T-cell (primary cell): ENCODE measurements at regions of chr20 and their contacts with region 1.

Region 1: GRCh38 chr20:53763707-53764414 is 170.2 kb upstream of the ZNF217 start:
- DNase-seq: no peak
- ATAC-seq: no peak
- H3K4me3 ChIP-seq: no peak overlapping the region
- H3K4me3 Mint-ChIP-seq: no peak overlapping the region
- H3K27ac ChIP-seq: no peak overlapping the region
- H3K27ac Mint-ChIP-seq: peak overlapping the region in 1 of 2 donors; percentile 9
- H3K4me1 ChIP-seq: no peaks in the 10 kb centered on the region
- H3K4me1 Mint-ChIP-seq: peaks cover under 1 to 8% (median 5%) of the 10 kb centered on the region in 3 donors
- H3K27me3 ChIP-seq: no peaks in the 10 kb centered on the region
- H3K27me3 Mint-ChIP-seq: no peaks in the 10 kb centered on the region

Region 2: DNA sequence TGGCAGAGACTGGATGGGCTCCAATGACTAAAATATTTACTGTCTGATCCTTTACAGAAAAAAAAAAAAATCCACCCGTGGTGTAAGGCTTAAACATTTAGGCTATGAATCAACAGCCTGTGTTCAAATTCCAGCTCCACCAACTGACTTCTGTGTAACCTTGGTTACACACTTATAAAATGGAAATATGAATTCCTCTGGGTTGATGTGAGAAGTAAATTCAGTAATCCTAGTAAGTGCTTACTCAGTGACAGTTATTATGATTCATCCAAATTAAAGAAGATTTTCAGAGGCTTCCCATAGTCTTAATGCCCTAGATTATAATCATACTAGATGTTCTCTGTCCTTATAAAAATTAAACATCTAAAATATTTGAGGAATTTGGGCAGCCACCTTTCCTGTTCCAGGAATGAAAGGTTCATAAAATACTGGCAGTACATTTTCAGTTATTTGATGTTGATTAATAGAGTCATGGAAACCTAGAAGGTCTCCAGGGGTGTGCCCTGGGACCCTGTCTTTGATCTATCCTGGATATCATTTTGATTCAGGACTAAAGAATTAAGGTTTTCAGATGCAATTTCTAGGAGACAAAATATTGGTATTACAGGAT is 10.0 kb after region 1 on chr20:
- CTCF ChIA-PET with region 1: no interaction called
- POLR2A ChIA-PET with region 1: interaction called in 1 of 2 experiments, 10 read pairs
- DNase-seq: no peak
- ATAC-seq: no peak
- H3K4me3 ChIP-seq: no peak overlapping the region
- H3K4me3 Mint-ChIP-seq: no peak overlapping the region
- H3K27ac ChIP-seq: no peak overlapping the region
- H3K27ac Mint-ChIP-seq: no peak overlapping the region
- H3K4me1 ChIP-seq: no peaks in the 10 kb centered on the region
- H3K4me1 Mint-ChIP-seq: no peaks in the 10 kb centered on the region
- H3K27me3 ChIP-seq: no peaks in the 10 kb centered on the region
- H3K27me3 Mint-ChIP-seq: no peaks in the 10 kb centered on the region

Region 3: DNA sequence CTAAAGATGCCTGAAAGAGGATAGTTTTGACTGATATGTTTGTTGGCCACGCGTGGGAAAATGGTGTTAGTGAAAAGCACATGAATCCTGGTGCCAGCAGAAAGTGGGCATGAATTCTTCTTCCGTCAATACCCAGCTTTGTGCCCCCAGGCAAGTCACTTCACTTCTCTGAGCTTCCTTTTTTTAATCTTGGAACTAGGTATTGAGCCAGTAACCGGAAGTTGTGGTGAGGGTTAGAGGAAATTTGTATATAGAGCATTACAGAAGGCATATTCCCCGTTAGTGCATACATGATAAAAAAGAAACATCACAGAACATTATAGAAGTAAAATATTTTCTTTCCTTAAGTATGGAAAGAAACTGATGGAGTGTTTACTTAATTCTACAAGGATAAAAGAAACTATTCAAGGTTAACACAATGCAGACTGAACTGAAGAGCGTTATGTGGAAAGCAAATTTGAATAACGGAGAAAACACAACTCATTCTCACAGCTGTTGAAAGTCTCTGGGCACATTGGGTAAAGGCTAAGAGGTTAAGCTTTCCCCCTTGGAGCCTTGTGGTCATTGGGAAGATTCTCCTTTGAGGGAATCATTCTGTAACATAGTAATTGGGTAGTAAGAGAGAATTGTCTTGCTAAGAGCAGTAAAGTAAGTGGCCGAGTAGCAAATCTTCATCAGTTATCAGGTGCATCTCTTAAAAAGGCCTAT is 83.4 kb after region 1 on chr20:
- CTCF ChIA-PET with region 1: no interaction called
- POLR2A ChIA-PET with region 1: no interaction called
- DNase-seq: peak in 2 of 35 experiments; percentile 22 to 58
- ATAC-seq: peak in 3 of 4 experiments; percentile 48 to 63 (median 49)
- H3K4me3 ChIP-seq: peak overlapping the region in 1 of 2 donors; percentile 32
- H3K4me3 Mint-ChIP-seq: peak overlapping the region; percentile 62 to 71 (median 68)
- H3K27ac ChIP-seq: no peak overlapping the region
- H3K27ac Mint-ChIP-seq: peak overlapping the region; percentile 91 to 94
- H3K4me1 ChIP-seq: peaks cover 45 to 58% of the 10 kb centered on the region in 2 experiments
- H3K4me1 Mint-ChIP-seq: peaks cover 65 to 77% (median 66%) of the 10 kb centered on the region in 3 donors
- H3K27me3 ChIP-seq: no peaks in the 10 kb centered on the region
- H3K27me3 Mint-ChIP-seq: no peaks in the 10 kb centered on the region

Region 4: DNA sequence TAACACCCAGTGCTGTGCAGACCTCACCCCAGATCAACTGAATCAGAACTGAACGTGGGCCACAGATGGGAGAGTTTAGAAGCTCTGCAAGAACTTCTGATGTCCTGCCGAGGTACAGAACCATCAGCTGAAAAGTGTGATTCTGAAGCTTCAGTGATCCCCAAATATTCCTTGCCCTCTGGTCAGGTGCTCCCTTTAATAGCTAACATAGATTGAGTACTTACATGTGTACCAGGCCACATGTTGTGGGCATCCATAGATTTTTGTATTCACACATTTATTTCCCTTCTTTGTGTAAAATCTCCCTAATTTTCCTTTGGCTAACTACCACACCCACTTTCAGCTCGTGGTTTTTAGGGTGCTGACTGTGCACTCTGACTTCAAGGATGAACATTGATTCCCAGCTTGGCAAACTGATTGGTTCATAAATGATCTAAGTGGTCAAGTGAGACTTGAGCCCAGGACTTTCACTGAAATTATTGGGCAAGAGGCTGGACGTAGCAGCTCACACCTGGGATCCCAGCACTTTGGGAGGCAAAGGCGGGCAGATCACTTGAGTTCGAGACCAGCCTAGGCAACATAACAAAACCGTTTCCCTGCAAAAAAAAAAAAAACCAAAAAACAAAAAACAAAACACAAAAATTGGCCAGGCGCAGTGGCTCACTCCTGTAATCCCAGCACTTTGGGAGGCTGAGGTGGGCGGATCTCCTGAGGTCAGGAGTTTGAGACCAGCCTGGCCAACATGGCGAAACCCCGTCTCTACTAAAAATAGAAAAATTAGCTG is 144.3 kb after region 1 on chr20:
- CTCF ChIA-PET with region 1: interaction called in 1 of 2 experiments, 10 read pairs
- POLR2A ChIA-PET with region 1: no interaction called
- DNase-seq: no peak
- ATAC-seq: no peak
- H3K4me3 ChIP-seq: no peak overlapping the region
- H3K4me3 Mint-ChIP-seq: no peak overlapping the region
- H3K27ac ChIP-seq: no peak overlapping the region
- H3K27ac Mint-ChIP-seq: no peak overlapping the region
- H3K4me1 ChIP-seq: peaks cover 0 to 2% of the 10 kb centered on the region in 2 experiments
- H3K4me1 Mint-ChIP-seq: peaks cover 8 to 18% (median 18%) of the 10 kb centered on the region in 3 donors
- H3K27me3 ChIP-seq: no peaks in the 10 kb centered on the region
- H3K27me3 Mint-ChIP-seq: no peaks in the 10 kb centered on the region